GM12878 (cell line): ENCODE measurements at regions of chr16 and their contacts with region 1.

Region 1: GRCh38 chr16:66552286-66553177 is at the start of gene CKLF:
- DNase-seq: peak; percentile 66
- ATAC-seq: peak; percentile 78
- H3K4me3 ChIP-seq: peak within 1 kb of the TSS; percentile 62
- H3K27ac ChIP-seq: peak within 1 kb of the TSS; percentile 33
- H3K4me1 ChIP-seq: peaks cover 23% of the 10 kb centered on the region
- H3K27me3 ChIP-seq: no peaks in the 10 kb centered on the region
- CTCF ChIP-seq: no peak
- EP300 ChIP-seq: no peak
- POLR2A ChIP-seq: peak; percentile 95
- RAD21 ChIP-seq: no peak
- polyA plus RNA-seq, gene CKLF: 181 to 193 TPM

Region 2: DNA sequence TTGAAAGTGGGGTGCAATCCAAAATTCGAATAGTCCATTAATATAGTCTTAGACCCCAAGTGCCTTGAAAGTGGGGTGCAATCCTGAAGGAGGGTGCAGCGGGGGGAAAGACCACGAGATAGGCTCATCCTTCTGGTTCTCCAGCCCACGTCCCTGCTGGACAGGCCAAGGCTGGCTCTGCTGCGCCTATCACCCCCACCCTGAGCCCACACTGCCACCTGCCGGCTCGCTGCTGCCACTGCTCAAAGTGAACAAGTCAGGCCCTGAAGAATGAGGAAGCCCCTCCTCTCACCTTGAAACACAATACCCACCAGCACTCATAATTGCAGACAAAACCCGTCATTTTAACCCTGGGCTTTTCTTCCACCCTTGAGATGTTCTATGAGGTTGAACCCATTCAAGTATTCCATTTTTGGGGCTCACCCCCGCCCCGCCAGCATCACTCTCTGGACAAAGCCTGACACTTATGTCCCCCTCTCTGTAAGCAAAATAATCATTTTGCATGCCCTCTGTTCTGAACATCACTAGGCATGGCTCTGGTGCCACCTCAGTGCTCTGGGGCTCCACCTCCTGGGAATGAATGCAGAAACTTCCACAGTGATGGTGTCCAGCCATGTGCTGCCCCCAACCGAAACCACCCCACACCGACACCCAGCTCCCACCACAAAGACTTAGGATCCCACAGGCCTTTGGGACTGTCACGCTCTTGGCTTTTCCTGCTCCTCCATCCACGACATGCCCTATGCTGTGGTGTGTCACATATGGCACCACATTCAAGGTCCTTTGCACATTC is 68.6 kb before region 1 on chr16:
- CTCF ChIA-PET with region 1: interaction called, 7 read pairs
- POLR2A ChIA-PET with region 1: interaction called, 9 read pairs
- RAD21 ChIA-PET with region 1: no interaction called
- SMC1A ChIA-PET with region 1: no interaction called
- in situ Hi-C with region 1: no loop called
- intact Hi-C with region 1: loop called (anchors 2 kb)
- DNase-seq: no peak
- ATAC-seq: peak; percentile 88
- H3K4me3 ChIP-seq: no peak overlapping the region
- H3K27ac ChIP-seq: no peak overlapping the region
- H3K4me1 ChIP-seq: peaks cover 5% of the 10 kb centered on the region
- H3K27me3 ChIP-seq: no peaks in the 10 kb centered on the region
- CTCF ChIP-seq: peak; percentile 96 to 99 (median 98)
- EP300 ChIP-seq: no peak
- POLR2A ChIP-seq: no peak
- RAD21 ChIP-seq: peak; percentile 90

Region 3: GRCh38 chr16:66516808-66517585 is 35.5 kb before region 1 on chr16:
- CTCF ChIA-PET with region 1: interaction called, 35 read pairs
- POLR2A ChIA-PET with region 1: interaction called, 21 read pairs
- RAD21 ChIA-PET with region 1: interaction called, 15 read pairs
- SMC1A ChIA-PET with region 1: interaction called, 86 read pairs
- in situ Hi-C with region 1: no loop called
- intact Hi-C with region 1: no loop called
- DNase-seq: peak; percentile 98
- ATAC-seq: peak; percentile 95
- H3K4me3 ChIP-seq: peak overlapping the region; percentile 11; the same call in 1 of the 2 replicates
- H3K27ac ChIP-seq: peak overlapping the region; percentile 84
- H3K4me1 ChIP-seq: peaks cover 50% of the 10 kb centered on the region
- H3K27me3 ChIP-seq: no peaks in the 10 kb centered on the region
- CTCF ChIP-seq: no peak
- EP300 ChIP-seq: peak; percentile 70 to 75
- POLR2A ChIP-seq: no peak; the same call in 1 of the 2 replicates
- RAD21 ChIP-seq: 0 out of 2 replicates have a peak, but pooled peaks have one; percentile 0

Region 4: DNA sequence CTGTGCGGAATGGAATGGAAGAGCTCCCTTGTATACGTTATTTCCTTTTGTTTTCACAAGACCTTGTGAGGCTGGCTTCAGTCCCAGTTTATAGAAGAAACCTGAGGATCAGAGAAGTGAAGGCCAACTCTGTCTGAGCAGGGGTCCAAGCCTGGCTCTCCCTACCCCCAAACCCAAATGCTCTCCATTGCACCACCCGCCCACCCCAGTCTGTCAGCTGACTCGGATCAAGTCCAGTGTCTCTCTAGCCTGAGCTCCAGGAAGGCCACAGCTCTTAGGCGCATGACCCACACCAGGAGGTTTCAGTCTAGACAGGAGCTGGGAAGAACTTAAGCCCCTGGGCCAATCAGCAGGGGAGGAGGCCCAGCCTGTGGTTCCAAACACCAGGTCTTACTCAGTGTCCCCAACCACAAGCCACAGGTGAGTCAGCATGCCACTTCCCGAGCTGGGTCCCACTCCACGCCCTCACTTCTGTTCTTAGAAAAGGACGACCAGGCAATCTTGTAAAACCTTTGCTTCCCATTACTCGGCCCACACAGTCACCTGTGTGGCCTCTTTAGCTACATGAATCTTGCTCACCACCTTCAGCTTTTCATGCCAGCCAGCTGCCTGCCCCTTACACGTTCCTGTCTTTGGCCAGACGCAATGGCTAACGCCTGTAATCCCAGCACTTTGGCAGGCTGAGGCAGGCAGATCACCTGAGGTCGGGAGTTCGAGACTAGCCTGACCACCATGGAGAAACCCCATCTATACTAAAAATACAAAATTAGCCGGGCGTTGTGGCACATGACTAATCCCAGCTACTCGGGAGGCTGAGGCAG is 30.4 kb before region 1 on chr16:
- CTCF ChIA-PET with region 1: interaction called, 35 read pairs
- POLR2A ChIA-PET with region 1: interaction called, 21 read pairs
- RAD21 ChIA-PET with region 1: interaction called, 15 read pairs
- SMC1A ChIA-PET with region 1: interaction called, 86 read pairs
- in situ Hi-C with region 1: no loop called
- intact Hi-C with region 1: loop called (anchors 1 kb)
- DNase-seq: peak; percentile 86
- ATAC-seq: peak; percentile 72
- H3K4me3 ChIP-seq: no peak overlapping the region
- H3K27ac ChIP-seq: peak overlapping the region; percentile 9; the same call in 1 of the 2 replicates
- H3K4me1 ChIP-seq: peaks cover 69% of the 10 kb centered on the region
- H3K27me3 ChIP-seq: no peaks in the 10 kb centered on the region
- CTCF ChIP-seq: no peak
- EP300 ChIP-seq: peak; percentile 66 to 89
- POLR2A ChIP-seq: no peak
- RAD21 ChIP-seq: no peak

Region 5: GRCh38 chr16:66539623-66540469 is 12.7 kb before region 1 on chr16:
- CTCF ChIA-PET with region 1: interaction called, 7 read pairs
- POLR2A ChIA-PET with region 1: interaction called, 10 read pairs
- RAD21 ChIA-PET with region 1: interaction called, 3 read pairs
- SMC1A ChIA-PET with region 1: interaction called, 7 read pairs
- in situ Hi-C with region 1: no loop called
- intact Hi-C with region 1: no loop called
- DNase-seq: no peak
- ATAC-seq: peak; percentile 84
- H3K4me3 ChIP-seq: no peak overlapping the region
- H3K27ac ChIP-seq: no peak overlapping the region
- H3K4me1 ChIP-seq: peaks cover 9% of the 10 kb centered on the region
- H3K27me3 ChIP-seq: peaks cover 0 to 3% of the 10 kb centered on the region in 2 experiments; a peak in 2 of 4 replicates
- CTCF ChIP-seq: no peak
- EP300 ChIP-seq: peak; percentile 24 to 45; a peak in 1 of 4 replicates
- POLR2A ChIP-seq: no peak
- RAD21 ChIP-seq: no peak

Region 6: DNA sequence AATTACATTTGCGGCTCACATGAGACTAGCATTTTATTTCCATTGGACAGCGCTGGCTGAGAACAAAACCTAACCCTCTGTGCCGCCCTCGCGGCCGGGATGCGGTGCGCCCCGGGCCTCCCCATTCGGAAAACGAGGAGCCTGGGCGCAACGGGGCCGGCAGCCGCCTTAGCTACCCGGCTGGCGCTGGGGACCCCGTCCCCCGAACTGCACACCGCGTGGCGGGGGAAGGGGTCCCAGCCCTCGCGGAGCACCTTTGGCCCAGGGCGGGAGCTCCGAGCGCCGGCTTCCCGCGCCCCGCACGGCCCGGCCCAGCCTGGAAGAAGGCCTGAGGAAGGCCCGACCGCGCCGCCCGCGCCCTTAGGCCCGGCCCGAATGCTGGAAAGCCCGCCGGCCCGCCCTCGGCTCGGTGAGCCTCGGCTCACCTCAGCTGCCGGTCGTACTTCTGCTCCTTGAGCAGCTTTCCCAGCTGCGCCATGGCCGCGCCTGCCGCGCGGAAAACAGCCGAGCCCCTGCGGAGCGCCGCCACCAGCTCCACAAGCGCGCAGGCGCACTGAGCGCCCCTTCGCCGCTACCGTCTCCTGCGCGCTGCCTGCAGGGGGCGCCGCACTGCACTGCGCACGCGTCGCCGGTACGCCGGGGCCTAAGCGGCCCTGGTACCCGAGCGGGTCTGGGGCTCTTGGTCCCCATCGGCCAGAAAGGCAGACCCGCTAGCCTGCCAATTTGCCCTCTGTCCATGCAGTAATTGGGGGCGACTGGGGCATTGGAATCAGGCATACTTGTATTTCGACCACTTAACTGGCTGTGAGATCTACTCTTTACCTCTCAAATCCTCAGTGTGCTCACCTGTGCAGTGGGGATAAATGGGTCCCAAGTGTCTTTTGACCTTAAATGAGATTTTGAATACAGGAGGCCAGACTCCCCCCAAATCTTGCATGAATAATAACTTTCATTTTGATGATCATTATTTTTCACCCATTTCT is 278.2 kb after region 1 on chr16 and contains the start of gene NAE1:
- CTCF ChIA-PET with region 1: no interaction called
- POLR2A ChIA-PET with region 1: no interaction called
- RAD21 ChIA-PET with region 1: no interaction called
- SMC1A ChIA-PET with region 1: no interaction called
- in situ Hi-C with region 1: no loop called
- intact Hi-C with region 1: no loop called
- DNase-seq: peak; percentile 57
- ATAC-seq: peak; percentile 95
- H3K4me3 ChIP-seq: peak within 1 kb of the TSS; percentile 96
- H3K27ac ChIP-seq: peak within 1 kb of the TSS; percentile 70
- H3K4me1 ChIP-seq: peaks cover 9% of the 10 kb centered on the region
- H3K27me3 ChIP-seq: no peaks in the 10 kb centered on the region
- CTCF ChIP-seq: peak; percentile 93 to 99 (median 99); a peak in 5 of 6 replicates
- EP300 ChIP-seq: no peak
- POLR2A ChIP-seq: peak; percentile 97
- RAD21 ChIP-seq: peak; percentile 52
- polyA plus RNA-seq, gene NAE1: 76.6 to 101 TPM

Region 7: DNA sequence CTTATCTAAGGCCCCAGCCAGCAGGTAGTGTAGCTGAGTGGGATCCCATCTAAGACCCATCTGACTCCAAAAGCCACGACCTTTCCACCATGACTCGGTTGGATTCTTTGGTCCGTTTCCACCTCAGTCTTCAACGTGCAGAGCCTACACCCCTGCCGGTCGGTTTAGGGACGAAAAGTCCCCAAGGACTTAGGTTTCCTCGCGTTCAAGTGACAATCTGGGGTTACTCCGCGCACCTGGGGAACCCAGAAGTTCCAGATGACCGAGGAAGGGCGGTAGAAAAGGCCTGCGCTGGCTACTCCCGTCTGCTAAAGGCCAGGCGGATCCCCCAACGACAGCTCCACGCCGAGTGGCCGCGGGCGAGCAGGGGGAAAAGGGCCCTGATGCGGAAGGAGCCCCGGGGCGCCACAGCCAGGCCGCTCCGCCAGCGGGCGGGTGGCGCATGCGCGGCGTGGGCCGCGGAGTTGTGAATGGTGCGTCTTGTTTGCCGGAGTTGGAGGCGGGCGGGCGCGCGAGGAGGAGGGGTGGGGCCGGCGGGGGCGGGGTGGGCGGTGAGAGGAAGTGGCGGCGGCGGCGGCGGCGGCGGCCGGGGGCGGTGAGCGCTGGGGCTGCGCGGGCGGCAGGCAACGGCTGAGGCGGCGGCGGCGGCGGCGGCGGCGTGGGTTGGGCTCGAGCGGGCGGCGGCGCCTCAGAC is 476.2 kb after region 1 on chr16 and contains the start of gene CBFB:
- CTCF ChIA-PET with region 1: no interaction called
- POLR2A ChIA-PET with region 1: no interaction called
- RAD21 ChIA-PET with region 1: no interaction called
- SMC1A ChIA-PET with region 1: no interaction called
- in situ Hi-C with region 1: loop called (anchors 25 kb)
- intact Hi-C with region 1: no loop called
- DNase-seq: peak; percentile 75
- ATAC-seq: peak; percentile 89
- H3K4me3 ChIP-seq: peak within 1 kb of the TSS; percentile 72
- H3K27ac ChIP-seq: peak within 1 kb of the TSS; percentile 99
- H3K4me1 ChIP-seq: peaks cover 13% of the 10 kb centered on the region
- H3K27me3 ChIP-seq: no peaks in the 10 kb centered on the region
- CTCF ChIP-seq: no peak
- EP300 ChIP-seq: no peak
- POLR2A ChIP-seq: peak; percentile 98
- RAD21 ChIP-seq: no peak
- polyA plus RNA-seq, gene CBFB: 25.3 to 43.6 TPM